ENCODE measurements at regions of chr4 and their contacts with region 1.

Region 1: DNA sequence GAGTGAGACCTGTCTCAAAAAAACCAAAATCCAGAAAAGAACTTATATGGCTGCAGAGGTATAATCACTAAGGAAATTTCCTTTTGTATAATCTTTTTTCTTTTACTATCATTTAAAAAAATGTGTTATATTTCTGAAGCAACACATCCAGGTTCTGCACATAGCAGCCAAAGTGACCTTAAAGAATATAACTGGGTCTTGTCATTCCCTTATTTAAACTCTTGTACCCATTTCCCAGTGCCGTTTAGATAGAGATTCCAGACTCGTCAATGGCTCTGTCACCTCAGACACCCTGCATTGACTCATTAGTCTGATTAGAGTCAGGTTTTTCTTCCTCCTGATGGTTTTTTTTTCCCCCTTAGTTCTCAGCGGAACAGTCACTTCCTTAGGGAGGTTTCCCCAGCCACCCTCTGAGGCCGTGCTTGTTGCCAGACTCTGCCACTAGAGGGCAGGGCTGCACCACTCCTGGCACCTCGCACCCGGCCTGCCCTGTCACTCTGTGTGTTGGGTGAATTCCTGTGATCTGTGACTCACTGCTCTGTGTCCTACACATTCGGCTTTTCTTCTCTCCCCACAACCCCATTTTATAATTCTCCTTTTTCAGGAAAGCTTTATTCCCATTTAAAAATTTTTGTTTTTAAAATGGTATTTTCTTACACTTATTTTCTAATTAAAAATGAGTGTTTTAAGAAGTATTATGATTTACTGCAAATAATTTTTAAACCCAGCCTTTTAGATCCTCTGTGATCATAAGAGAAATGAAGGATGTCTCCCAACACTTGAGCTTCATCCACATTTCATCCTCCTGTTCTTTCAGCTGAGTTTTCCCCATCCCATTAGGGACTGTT is 32.1 kb downstream of the HTT start:
- DNase-seq: peak; percentile 59 to 84 (median 76)
- H3K4me3 ChIP-seq: no peak overlapping the region
- H3K4me3 Mint-ChIP-seq: no peak overlapping the region
- H3K27ac ChIP-seq: no peak overlapping the region
- H3K27ac Mint-ChIP-seq: peak overlapping the region in 6 of 8 donors; percentile 1 to 83 (median 60)
- H3K4me1 ChIP-seq: no peaks in the 10 kb centered on the region
- H3K4me1 Mint-ChIP-seq: peaks cover 6 to 11% (median 10%) of the 10 kb centered on the region in 3 donors
- H3K27me3 ChIP-seq: no peaks in the 10 kb centered on the region
- H3K27me3 Mint-ChIP-seq: peaks cover 0 to 1% of the 10 kb centered on the region in 2 donors

Region 2: GRCh38 chr4:2934813-2935761 is 171.5 kb before region 1 on chr4:
- CTCF ChIA-PET with region 1: no interaction called
- POLR2A ChIA-PET with region 1: no interaction called
- DNase-seq: peak; percentile 93 to 97 (median 96)
- H3K4me3 ChIP-seq: peak overlapping the region; percentile 91
- H3K4me3 Mint-ChIP-seq: peak overlapping the region; percentile 88 to 99 (median 90)
- H3K27ac ChIP-seq: peak overlapping the region; percentile 96
- H3K27ac Mint-ChIP-seq: peak overlapping the region; percentile 86 to 100 (median 96)
- H3K4me1 ChIP-seq: peaks cover 55% of the 10 kb centered on the region
- H3K4me1 Mint-ChIP-seq: peaks cover 46 to 66% (median 59%) of the 10 kb centered on the region in 3 donors
- H3K27me3 ChIP-seq: no peaks in the 10 kb centered on the region
- H3K27me3 Mint-ChIP-seq: no peaks in the 10 kb centered on the region

Region 3: DNA sequence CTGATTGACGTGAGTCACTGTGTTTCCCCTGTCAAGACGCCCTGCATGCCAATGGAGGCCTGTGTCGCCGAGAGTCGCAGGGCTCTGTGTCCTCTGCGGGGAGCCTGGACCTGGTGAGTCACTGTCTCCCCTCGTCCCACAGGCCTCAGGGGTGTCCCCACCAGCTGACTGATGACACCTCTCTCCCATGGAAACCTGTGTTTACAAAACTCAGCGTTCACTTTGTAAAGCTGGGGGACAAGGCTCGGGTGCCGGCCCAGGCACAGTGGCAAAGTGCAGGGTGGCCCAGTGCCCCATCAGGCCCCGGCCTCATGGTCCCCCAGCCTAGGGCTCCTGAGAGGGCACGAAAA is 314.0 kb after region 1 on chr4:
- CTCF ChIA-PET with region 1: no interaction called
- POLR2A ChIA-PET with region 1: no interaction called
- DNase-seq: peak in 1 of 5 donors; percentile 36
- H3K4me3 ChIP-seq: no peak overlapping the region
- H3K4me3 Mint-ChIP-seq: no peak overlapping the region
- H3K27ac ChIP-seq: no peak overlapping the region
- H3K27ac Mint-ChIP-seq: peak overlapping the region in 1 of 8 donors; percentile 43
- H3K4me1 ChIP-seq: no peaks in the 10 kb centered on the region
- H3K4me1 Mint-ChIP-seq: no peaks in the 10 kb centered on the region
- H3K27me3 ChIP-seq: no peaks in the 10 kb centered on the region
- H3K27me3 Mint-ChIP-seq: no peaks in the 10 kb centered on the region

Region 4: GRCh38 chr4:3442959-3443749 is 336.6 kb after region 1 on chr4:
- CTCF ChIA-PET with region 1: interaction called, 17 read pairs
- POLR2A ChIA-PET with region 1: no interaction called
- DNase-seq: peak; percentile 50 to 63 (median 61)
- H3K4me3 ChIP-seq: no peak overlapping the region
- H3K4me3 Mint-ChIP-seq: no peak overlapping the region
- H3K27ac ChIP-seq: no peak overlapping the region
- H3K27ac Mint-ChIP-seq: peak overlapping the region in 1 of 8 donors; percentile 38
- H3K4me1 ChIP-seq: no peaks in the 10 kb centered on the region
- H3K4me1 Mint-ChIP-seq: no peaks in the 10 kb centered on the region
- H3K27me3 ChIP-seq: no peaks in the 10 kb centered on the region
- H3K27me3 Mint-ChIP-seq: no peaks in the 10 kb centered on the region

Region 5: DNA sequence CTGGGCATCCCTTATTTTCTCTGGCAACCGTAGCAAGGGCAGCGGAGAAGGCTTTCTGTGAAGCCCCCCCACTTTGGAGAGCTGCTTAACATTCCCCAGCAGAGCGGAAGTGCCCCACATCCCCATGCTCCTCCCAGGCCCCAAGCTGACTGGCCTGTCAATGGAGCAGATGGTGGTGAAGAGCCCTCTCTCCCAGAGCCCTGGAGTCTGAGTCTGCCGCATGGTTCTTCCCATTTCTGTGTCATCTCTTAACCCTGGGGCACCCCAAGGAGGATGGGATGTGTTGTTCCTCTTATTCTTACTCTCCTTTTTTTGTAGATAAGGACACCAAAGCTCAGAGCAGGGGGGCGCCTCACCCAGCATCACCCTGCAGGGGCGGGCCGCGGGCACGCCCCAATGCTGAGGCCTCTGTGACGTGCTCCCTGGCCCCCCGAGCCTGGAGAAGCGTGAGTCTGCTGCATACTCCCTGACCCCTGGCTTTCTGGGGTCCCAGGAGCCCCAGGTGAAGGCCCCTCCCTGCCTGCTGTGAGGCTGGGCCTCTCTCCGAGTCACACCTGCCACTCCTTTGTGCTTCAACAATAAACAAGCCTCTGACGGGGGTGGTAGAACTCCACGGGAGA is 695.5 kb after region 1 on chr4:
- CTCF ChIA-PET with region 1: no interaction called
- POLR2A ChIA-PET with region 1: no interaction called
- DNase-seq: no peak
- H3K4me3 ChIP-seq: no peak overlapping the region
- H3K4me3 Mint-ChIP-seq: no peak overlapping the region
- H3K27ac ChIP-seq: no peak overlapping the region
- H3K27ac Mint-ChIP-seq: no peak overlapping the region
- H3K4me1 ChIP-seq: no peaks in the 10 kb centered on the region
- H3K4me1 Mint-ChIP-seq: no peaks in the 10 kb centered on the region
- H3K27me3 ChIP-seq: no peaks in the 10 kb centered on the region
- H3K27me3 Mint-ChIP-seq: peaks cover 13 to 14% of the 10 kb centered on the region in 2 donors